HEK293T (cell line): ENCODE measurements at regions of chr17 and their contacts with region 1.

Region 1: DNA sequence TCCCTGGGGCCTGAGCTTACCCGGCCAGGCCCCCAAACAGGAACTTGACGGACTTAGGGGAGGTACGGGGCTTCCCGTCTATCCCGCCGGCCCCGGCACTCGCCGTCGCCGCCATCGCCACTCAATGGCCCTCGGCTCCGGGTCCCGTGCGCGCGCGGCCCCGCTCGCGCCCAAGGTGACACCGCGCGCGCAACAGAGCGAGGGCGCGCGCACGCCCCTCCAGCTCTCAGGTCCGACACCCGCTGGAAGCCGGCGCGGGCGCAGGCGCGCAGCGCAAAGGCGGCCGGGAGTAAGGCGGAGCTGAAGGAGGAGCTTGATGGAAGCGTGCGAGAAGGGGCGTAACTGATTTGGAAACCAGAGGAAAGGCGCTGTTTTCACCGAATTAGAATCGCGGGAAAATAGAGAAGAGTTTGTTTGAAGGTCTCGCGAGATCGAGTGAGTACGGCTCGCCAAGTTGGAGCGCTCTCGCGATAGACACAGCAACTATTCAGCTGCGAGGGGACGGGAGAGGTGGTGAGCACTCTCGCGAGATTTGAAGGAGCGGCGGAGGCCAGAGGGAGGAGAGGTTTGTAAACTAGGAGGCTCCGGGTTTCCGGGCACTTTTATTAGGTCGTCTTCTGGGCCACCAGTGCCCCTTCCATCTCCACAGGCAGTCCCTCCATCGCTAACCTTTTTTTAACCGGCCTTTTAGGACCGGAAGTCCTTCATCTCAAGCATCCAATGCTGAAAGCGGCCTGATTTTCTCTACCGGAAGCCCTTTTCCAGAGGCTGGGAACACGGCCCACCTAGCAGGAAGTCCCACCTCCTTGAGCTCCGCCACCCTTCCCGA is at the starts of genes RNF167 and SLC25A11:
- DNase-seq: peak; percentile 96

Region 2: GRCh38 chr17:4812690-4813089 is 127.3 kb before region 1 on chr17:
- CTCF ChIA-PET with region 1: no interaction called
- POLR2A ChIA-PET with region 1: no interaction called
- DNase-seq: no peak

Region 3: GRCh38 chr17:4908301-4908700 is 31.7 kb before region 1 on chr17:
- CTCF ChIA-PET with region 1: interaction called, 5 read pairs
- POLR2A ChIA-PET with region 1: interaction called, 38 read pairs
- DNase-seq: no peak

Region 4: GRCh38 chr17:4913994-4914393 is 26.0 kb before region 1 on chr17:
- CTCF ChIA-PET with region 1: interaction called, 5 read pairs
- POLR2A ChIA-PET with region 1: interaction called, 38 read pairs
- DNase-seq: no peak

Region 5: DNA sequence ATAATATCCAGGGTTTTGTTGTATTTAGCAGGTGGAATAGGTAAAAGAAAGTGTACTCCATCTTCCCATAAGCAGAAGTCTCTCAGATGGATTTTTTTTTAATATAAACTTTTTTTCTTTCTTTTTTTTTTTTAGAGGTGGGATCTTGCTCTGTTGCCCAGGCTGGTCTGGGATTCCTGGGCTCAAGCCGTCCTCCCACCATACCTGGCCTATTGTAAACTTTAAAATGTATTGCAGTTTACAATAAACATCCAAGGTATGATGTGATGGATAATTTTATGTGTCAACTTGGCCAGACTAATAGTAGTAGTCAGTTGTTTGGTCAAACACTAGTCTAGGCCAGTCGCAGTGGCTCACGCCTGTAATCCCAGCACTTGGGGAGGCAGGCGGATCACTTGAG is 18.7 kb before region 1 on chr17:
- CTCF ChIA-PET with region 1: no interaction called
- POLR2A ChIA-PET with region 1: interaction called, 30 read pairs
- DNase-seq: no peak

Region 6: GRCh38 chr17:4956493-4957061 is 16.6 kb after region 1 on chr17:
- CTCF ChIA-PET with region 1: interaction called, 3 read pairs
- POLR2A ChIA-PET with region 1: interaction called, 101 read pairs
- DNase-seq: no peak

Region 7: DNA sequence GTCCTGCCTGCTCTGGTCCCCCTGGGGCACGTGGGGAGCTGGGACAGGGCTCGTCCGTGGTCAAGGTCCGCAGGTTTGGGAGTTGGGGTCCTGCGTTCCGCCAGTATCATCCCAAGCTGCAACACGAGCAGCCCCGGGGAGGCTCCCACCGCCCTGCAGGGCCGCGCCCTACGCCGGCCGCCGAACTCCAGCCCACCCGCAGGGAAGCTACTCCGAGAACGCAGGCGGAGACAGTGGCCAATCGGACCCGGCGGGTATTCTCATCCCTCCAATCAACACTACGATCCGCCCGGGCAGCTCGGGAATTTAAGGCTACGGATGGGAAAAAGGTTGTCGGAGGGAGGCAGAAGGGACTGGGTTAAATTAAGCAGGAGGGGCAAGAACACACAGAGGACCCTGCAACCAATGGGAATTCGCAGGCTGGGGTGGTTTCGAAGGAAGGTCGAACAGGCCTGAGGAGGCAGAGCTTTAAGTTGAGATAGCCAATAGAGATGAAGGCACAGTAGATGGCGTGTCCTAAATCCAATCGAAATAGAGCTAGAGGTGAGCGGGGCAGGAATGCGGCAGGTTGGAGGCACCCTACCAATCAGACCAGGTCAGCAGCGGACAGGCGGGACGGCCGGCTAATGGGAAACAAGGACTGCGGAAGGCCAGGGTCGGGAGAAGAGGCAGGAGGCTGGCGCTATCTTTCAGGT is 27.0 kb after region 1 on chr17:
- CTCF ChIA-PET with region 1: no interaction called
- POLR2A ChIA-PET with region 1: interaction called, 84 read pairs
- DNase-seq: peak; percentile 95

Region 8: GRCh38 chr17:4986951-4987766 is 47.1 kb after region 1 on chr17 and contains the start of gene CAMTA2:
- CTCF ChIA-PET with region 1: interaction called, 3 read pairs
- POLR2A ChIA-PET with region 1: interaction called, 21 read pairs
- DNase-seq: peak; percentile 79

Region 9: DNA sequence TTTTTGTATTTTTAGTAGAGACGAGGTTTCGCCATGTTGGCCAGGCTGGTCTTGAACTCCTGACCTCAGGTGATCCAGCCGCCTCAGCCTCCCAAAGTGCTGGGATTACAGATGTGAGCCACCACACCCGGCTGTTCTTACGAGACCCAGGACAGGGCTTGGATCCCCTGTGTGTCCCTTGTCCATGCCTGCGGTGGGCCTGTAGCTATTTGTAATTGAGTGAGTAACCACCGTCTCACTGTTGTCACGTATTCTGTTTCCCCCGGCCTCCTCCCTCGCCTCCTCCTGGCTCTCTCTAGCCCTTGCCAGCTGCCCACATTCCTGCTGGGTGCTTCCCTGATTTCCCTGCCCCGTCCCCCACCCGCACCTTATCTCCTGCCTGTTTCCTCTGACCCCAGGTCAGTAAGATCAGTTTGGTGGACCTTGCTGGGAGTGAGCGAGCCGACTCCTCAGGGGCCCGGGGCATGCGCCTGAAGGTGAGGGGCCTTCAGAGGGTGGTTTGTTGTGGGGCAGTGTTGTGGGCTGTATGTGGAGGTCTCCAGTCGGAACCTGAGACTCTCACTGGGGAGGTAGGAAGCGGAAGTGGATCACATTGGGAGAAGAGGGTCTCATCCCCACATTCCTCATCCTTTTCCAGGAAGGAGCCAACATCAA is 63.3 kb after region 1 on chr17:
- CTCF ChIA-PET with region 1: no interaction called
- POLR2A ChIA-PET with region 1: no interaction called
- DNase-seq: no peak